H1 (cell line): ENCODE measurements at regions of chr14 and their contacts with region 1.

Region 1: GRCh38 chr14:74257078-74257989 is 18.1 kb downstream of the VSX2 start:
- DNase-seq: peak in 1 of 2 experiments; percentile 86
- H3K4me3 ChIP-seq: peak overlapping the region; percentile 35 to 87 (median 44)
- H3K27ac ChIP-seq: no peak overlapping the region
- H3K4me1 ChIP-seq: no peaks in the 10 kb centered on the region; a peak in 1 of 7 replicates
- H3K27me3 ChIP-seq: peaks cover 3 to 18% (median 17%) of the 10 kb centered on the region in 4 experiments
- CTCF ChIP-seq: peak; percentile 69 to 98 (median 78)
- EP300 ChIP-seq: 0 out of 3 replicates have a peak, but pooled peaks of 1 of the 2 experiments have one; percentile 22
- POLR2A ChIP-seq: no peak
- RAD21 ChIP-seq: peak; percentile 35 to 50

Region 2: DNA sequence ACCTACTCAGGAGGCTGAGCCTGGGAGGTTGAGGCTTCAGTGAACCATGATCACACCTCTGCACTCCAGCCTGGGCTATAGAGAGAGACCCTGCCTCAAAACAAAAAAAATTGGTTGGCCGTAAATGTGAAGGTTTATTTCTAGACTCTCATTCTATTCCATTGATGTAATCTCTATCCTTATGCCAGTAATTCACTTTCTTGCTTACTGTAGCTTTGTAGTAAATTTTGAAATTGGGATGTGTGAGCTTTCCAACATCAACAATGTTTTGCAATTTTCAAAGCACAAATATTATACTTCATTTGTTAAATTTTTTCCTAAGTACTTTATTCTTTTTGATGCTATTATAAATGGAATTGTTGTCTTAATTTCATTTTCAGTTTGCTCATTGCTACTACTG is 148.0 kb before region 1 on chr14:
- CTCF ChIA-PET with region 1: interaction called, 13 read pairs
- POLR2A ChIA-PET with region 1: interaction called, 3 read pairs
- DNase-seq: no peak
- H3K4me3 ChIP-seq: no peak overlapping the region
- H3K27ac ChIP-seq: no peak overlapping the region
- H3K4me1 ChIP-seq: no peaks in the 10 kb centered on the region
- H3K27me3 ChIP-seq: no peaks in the 10 kb centered on the region
- CTCF ChIP-seq: no peak
- EP300 ChIP-seq: no peak
- POLR2A ChIP-seq: no peak
- RAD21 ChIP-seq: no peak

Region 3: GRCh38 chr14:74207947-74208346 is 49.4 kb before region 1 on chr14:
- CTCF ChIA-PET with region 1: interaction called, 123 read pairs
- POLR2A ChIA-PET with region 1: no interaction called
- DNase-seq: no peak
- H3K4me3 ChIP-seq: no peak overlapping the region
- H3K27ac ChIP-seq: no peak overlapping the region
- H3K4me1 ChIP-seq: peaks cover 0 to 2% (median 0%) of the 10 kb centered on the region in 4 experiments; a peak in 1 of 7 replicates
- H3K27me3 ChIP-seq: no peaks in the 10 kb centered on the region
- CTCF ChIP-seq: peak in 2 of 3 experiments; percentile 82 to 84; a peak in 3 of 4 replicates
- EP300 ChIP-seq: no peak
- POLR2A ChIP-seq: no peak
- RAD21 ChIP-seq: peak; percentile 87 to 91

Region 4: GRCh38 chr14:74217672-74218448 is 39.5 kb before region 1 on chr14:
- CTCF ChIA-PET with region 1: interaction called, 139 read pairs
- POLR2A ChIA-PET with region 1: no interaction called
- DNase-seq: peak; percentile 67 to 97
- H3K4me3 ChIP-seq: peak overlapping the region in 1 of 4 experiments; percentile 29; a peak in 1 of 8 replicates
- H3K27ac ChIP-seq: no peak overlapping the region
- H3K4me1 ChIP-seq: peaks cover 0 to 7% (median 0%) of the 10 kb centered on the region in 4 experiments; a peak in 1 of 7 replicates
- H3K27me3 ChIP-seq: peaks cover 0 to 20% (median 15%) of the 10 kb centered on the region in 4 experiments; a peak in 6 of 7 replicates
- CTCF ChIP-seq: peak; percentile 87 to 96 (median 89)
- EP300 ChIP-seq: no peak
- POLR2A ChIP-seq: no peak
- RAD21 ChIP-seq: peak; percentile 56 to 80

Region 5: GRCh38 chr14:74240794-74241651 is 16.3 kb before region 1 on chr14:
- CTCF ChIA-PET with region 1: interaction called, 122 read pairs
- POLR2A ChIA-PET with region 1: interaction called, 3 read pairs
- DNase-seq: peak in 1 of 2 experiments; percentile 81
- H3K4me3 ChIP-seq: peak overlapping the region; percentile 21 to 55 (median 38); a peak in 7 of 8 replicates
- H3K27ac ChIP-seq: no peak overlapping the region
- H3K4me1 ChIP-seq: peaks cover 6 to 35% (median 15%) of the 10 kb centered on the region in 4 experiments
- H3K27me3 ChIP-seq: peaks cover 59 to 83% (median 75%) of the 10 kb centered on the region in 4 experiments
- CTCF ChIP-seq: no peak
- EP300 ChIP-seq: no peak
- POLR2A ChIP-seq: no peak
- RAD21 ChIP-seq: no peak

Region 6: DNA sequence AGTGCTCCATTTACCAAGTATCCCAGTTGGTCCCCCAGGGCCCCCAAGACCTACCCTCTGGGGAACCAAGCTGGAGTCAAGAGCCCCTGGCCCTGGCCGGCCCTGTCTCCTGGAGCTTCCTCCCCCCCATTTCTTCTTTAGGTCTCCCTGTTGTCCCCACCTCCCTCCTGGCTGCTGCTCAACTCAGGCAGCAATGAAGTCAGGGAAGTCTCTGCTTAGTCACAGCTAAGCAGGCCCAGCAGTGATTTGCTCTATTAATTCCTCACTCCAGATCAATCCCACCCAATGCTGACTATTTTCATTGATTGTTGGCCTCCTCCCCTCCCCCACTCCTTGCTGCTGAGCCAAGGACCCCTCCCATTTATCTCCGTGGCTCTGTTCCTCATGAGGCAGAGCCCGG is 10.3 kb after region 1 on chr14:
- CTCF ChIA-PET with region 1: interaction called, 10 read pairs
- POLR2A ChIA-PET with region 1: interaction called, 4 read pairs
- DNase-seq: no peak
- H3K4me3 ChIP-seq: no peak overlapping the region
- H3K27ac ChIP-seq: no peak overlapping the region
- H3K4me1 ChIP-seq: peaks cover 0 to 3% (median 1%) of the 10 kb centered on the region in 4 experiments; a peak in 2 of 7 replicates
- H3K27me3 ChIP-seq: no peaks in the 10 kb centered on the region; a peak in 1 of 7 replicates
- CTCF ChIP-seq: no peak
- EP300 ChIP-seq: no peak
- POLR2A ChIP-seq: no peak
- RAD21 ChIP-seq: no peak

Region 7: GRCh38 chr14:74290415-74290814 is 33.1 kb after region 1 on chr14:
- CTCF ChIA-PET with region 1: interaction called, 56 read pairs
- POLR2A ChIA-PET with region 1: no interaction called
- DNase-seq: no peak
- H3K4me3 ChIP-seq: no peak overlapping the region
- H3K27ac ChIP-seq: no peak overlapping the region
- H3K4me1 ChIP-seq: 0 out of 7 replicates have a peak, but pooled peaks cover 0 to 2% (median 0%) of the 10 kb centered on the region in 4 experiments
- H3K27me3 ChIP-seq: no peaks in the 10 kb centered on the region
- CTCF ChIP-seq: peak; percentile 32 to 55 (median 52)
- EP300 ChIP-seq: no peak
- POLR2A ChIP-seq: no peak
- RAD21 ChIP-seq: peak; percentile 38 to 41; a peak in 3 of 4 replicates